PC-9 (cell line): ENCODE measurements at regions of chr11 and their contacts with region 1.

Region 1: DNA sequence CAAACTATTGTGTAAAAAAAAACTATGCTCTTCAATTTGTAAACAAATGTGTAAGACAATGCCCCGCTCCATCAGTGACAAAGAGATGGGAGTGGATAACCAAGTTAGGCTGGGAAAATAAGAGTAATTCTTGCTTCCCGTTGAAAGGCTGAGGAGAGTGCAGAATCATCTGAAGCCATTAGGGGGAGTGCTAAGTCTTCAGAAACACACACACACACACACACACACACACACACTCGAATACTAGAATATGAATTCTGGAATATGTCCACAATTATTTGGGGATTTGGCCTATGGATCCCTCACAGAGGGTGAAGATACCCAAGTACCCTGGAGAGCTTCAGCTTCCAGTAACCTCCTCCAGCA is 27.8 kb upstream of the ROBO3 start:
- DNase-seq: peak; percentile 22 to 68
- H3K4me3 ChIP-seq: 0 out of 2 replicates have a peak overlapping the region, but pooled peaks have one; percentile 11
- H3K27ac ChIP-seq: no peak overlapping the region
- H3K4me1 ChIP-seq: peaks cover 48% of the 10 kb centered on the region
- H3K27me3 ChIP-seq: peaks cover 13% of the 10 kb centered on the region
- CTCF ChIP-seq: peak; percentile 66

Region 2: DNA sequence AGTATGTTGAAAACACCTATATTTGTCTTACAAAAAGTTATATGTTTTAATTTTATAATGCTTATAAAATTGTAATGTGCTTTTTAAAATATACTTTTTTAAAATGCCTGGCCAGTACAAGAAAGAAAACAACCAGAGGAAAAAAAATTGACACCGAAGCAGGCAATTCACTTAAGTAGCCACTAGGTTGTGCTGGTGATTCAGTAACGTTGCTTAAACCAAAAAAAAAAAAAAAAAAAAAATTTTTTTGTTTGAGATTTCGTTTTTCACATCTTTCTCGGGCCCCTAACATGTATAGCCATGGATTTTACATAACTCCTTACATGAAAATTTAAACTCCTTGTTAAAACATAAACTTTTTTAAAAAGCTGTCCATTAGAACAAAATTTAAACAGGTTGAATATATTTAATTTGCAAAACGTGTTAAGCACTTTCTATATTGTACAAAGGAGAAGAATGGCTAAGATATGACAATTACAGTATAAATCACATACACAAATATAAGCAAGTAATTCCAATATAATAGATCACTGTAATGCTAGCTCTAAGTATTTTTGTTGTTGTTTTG is 422.0 kb before region 1 on chr11:
- CTCF ChIA-PET with region 1: interaction called, 4 read pairs
- POLR2A ChIA-PET with region 1: no interaction called
- intact Hi-C with region 1: loop called (anchors 2 kb)
- DNase-seq: peak in 1 of 2 experiments; percentile 39
- H3K4me3 ChIP-seq: no peak overlapping the region
- H3K27ac ChIP-seq: no peak overlapping the region
- H3K4me1 ChIP-seq: no peaks in the 10 kb centered on the region
- H3K27me3 ChIP-seq: peaks cover 5% of the 10 kb centered on the region
- CTCF ChIP-seq: peak; percentile 72

Region 3: DNA sequence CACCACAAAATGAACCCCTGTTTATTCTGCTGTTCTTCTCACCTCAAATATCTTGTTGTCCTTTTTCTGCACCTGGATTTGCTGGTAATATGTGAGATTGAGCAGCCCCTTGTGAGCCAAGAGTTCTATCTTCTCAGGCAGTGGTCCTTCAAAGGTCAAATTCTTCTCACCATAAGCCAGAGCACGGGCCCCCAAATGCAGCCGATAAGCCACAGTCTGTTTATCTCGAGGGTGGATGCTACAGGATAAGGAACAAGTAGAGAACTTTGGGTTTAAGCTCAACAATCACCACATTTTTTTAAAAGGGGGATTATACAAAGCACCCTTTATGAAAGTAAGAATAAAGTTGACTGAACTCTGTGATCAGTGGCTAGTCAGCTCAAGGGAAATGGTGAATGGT is 199.0 kb before region 1 on chr11:
- CTCF ChIA-PET with region 1: no interaction called
- POLR2A ChIA-PET with region 1: no interaction called
- intact Hi-C with region 1: no loop called
- DNase-seq: no peak
- H3K4me3 ChIP-seq: no peak overlapping the region
- H3K27ac ChIP-seq: no peak overlapping the region
- H3K4me1 ChIP-seq: no peaks in the 10 kb centered on the region
- H3K27me3 ChIP-seq: no peaks in the 10 kb centered on the region
- CTCF ChIP-seq: no peak

Region 4: GRCh38 chr11:124673333-124674167 is 163.9 kb before region 1 on chr11 and contains the starts of genes SIAE and SPA17:
- CTCF ChIA-PET with region 1: interaction called, 10 read pairs
- POLR2A ChIA-PET with region 1: interaction called, 3 read pairs
- intact Hi-C with region 1: loop called (anchors 1 kb)
- DNase-seq: peak; percentile 91 to 93
- H3K4me3 ChIP-seq: peak within 1 kb of the TSS; percentile 83
- H3K27ac ChIP-seq: peak within 1 kb of the TSS; percentile 50
- H3K4me1 ChIP-seq: peaks cover 18% of the 10 kb centered on the region
- H3K27me3 ChIP-seq: no peaks in the 10 kb centered on the region
- CTCF ChIP-seq: no peak
- total RNA-seq, gene SIAE: 29.2 and 37.9 TPM in 2 replicates
- total RNA-seq, gene SPA17: 6.1 and 15.7 TPM in 2 replicates

Region 5: GRCh38 chr11:124724979-124725718 is 112.3 kb before region 1 on chr11:
- CTCF ChIA-PET with region 1: no interaction called
- POLR2A ChIA-PET with region 1: no interaction called
- intact Hi-C with region 1: no loop called
- DNase-seq: no peak
- H3K4me3 ChIP-seq: no peak overlapping the region
- H3K27ac ChIP-seq: no peak overlapping the region
- H3K4me1 ChIP-seq: no peaks in the 10 kb centered on the region
- H3K27me3 ChIP-seq: peaks cover 47% of the 10 kb centered on the region
- CTCF ChIP-seq: no peak

Region 6: DNA sequence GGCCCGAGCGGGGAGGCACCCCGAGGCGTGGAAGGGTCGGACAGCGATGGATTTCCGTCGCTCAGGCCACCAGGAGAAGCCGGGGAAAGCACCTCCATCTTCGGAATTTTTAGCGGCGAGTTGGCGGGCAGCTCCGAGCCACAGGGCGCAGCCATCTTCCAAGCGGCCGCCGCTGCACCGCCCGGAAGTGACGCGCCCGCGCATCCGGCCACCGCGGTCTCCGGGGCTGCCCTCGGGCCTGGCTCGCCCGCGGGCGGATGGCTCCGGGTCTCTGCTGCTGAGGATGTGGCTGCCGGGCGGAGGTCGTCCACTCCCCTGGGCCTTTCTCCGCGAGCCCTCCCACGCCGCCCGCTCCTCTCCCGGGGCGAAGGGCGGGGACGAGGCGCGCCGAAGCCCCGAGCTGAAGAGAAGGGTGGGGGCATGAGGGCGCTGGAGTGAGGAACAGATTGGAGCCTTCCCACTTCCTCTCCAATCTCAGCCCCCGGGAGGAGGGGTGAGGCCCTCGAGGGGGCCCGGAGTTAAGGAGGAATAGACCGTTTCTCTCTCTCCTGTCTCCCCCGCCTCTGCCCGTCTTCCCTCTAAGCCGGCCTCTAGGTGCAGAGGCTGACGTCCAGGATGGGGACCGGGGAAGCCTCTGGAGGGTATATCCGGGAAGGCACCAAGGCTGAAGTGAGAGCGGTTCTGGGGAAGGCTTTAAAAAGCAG is 37.1 kb before region 1 on chr11 and contains the start of gene MSANTD2:
- CTCF ChIA-PET with region 1: interaction called, 6 read pairs
- POLR2A ChIA-PET with region 1: no interaction called
- intact Hi-C with region 1: loop called (anchors 1 kb)
- DNase-seq: peak; percentile 53 to 71
- H3K4me3 ChIP-seq: peak within 1 kb of the TSS; percentile 97
- H3K27ac ChIP-seq: peak within 1 kb of the TSS; percentile 56
- H3K4me1 ChIP-seq: peaks cover 29% of the 10 kb centered on the region
- H3K27me3 ChIP-seq: no peaks in the 10 kb centered on the region
- CTCF ChIP-seq: no peak
- total RNA-seq, gene MSANTD2: 16.9 and 18.1 TPM in 2 replicates

Region 7: GRCh38 chr11:124823504-124824372 is 13.7 kb before region 1 on chr11:
- CTCF ChIA-PET with region 1: no interaction called
- POLR2A ChIA-PET with region 1: no interaction called
- intact Hi-C with region 1: no loop called
- DNase-seq: no peak
- H3K4me3 ChIP-seq: no peak overlapping the region
- H3K27ac ChIP-seq: no peak overlapping the region
- H3K4me1 ChIP-seq: no peaks in the 10 kb centered on the region
- H3K27me3 ChIP-seq: no peaks in the 10 kb centered on the region
- CTCF ChIP-seq: no peak

Region 8: DNA sequence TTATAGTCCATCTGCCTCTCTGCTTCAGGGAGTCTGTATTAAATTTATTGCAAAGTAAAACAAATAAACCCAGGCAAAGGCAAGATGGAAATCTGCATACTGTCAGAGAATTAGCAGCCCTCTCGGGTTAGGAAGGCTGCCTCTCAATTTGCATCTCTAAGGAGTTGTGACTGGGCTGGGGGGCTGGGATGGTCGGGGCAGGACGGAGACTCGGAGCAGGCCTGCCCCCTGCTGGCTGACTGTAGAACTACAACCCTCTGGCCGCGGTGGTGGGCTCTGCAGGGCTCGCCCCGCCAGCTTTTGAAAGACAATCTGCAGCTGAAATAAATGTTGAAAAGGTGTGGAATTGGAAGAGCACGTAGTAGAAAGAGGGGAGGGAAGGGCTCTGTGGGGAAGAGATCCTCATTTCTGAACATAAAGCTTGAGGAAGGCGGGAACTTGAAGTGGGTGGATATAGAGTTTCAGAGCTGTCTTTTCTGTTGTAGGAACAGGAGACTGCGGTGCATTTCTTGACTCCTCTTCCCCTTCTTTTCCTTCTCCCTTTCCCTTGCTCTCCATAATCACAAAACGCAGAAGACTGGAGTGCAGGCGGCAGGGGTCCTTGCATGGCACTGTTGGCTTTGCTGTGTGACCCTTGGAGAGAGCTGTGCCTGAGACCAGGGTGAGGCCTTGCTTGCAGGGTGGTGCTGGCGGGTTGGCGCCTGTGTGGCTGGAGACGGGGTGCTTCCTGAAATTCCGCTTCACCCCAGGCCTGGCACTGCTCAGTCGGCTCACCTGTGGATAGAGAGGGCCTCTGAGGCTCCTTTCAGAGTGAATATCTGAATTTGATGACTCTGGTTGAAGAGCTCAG is 304.4 kb after region 1 on chr11:
- CTCF ChIA-PET with region 1: no interaction called
- POLR2A ChIA-PET with region 1: no interaction called
- intact Hi-C with region 1: loop called (anchors 1 kb)
- DNase-seq: peak in 1 of 2 experiments; percentile 46
- H3K4me3 ChIP-seq: no peak overlapping the region
- H3K27ac ChIP-seq: no peak overlapping the region
- H3K4me1 ChIP-seq: no peaks in the 10 kb centered on the region
- H3K27me3 ChIP-seq: no peaks in the 10 kb centered on the region
- CTCF ChIP-seq: peak; percentile 100

Region 9: DNA sequence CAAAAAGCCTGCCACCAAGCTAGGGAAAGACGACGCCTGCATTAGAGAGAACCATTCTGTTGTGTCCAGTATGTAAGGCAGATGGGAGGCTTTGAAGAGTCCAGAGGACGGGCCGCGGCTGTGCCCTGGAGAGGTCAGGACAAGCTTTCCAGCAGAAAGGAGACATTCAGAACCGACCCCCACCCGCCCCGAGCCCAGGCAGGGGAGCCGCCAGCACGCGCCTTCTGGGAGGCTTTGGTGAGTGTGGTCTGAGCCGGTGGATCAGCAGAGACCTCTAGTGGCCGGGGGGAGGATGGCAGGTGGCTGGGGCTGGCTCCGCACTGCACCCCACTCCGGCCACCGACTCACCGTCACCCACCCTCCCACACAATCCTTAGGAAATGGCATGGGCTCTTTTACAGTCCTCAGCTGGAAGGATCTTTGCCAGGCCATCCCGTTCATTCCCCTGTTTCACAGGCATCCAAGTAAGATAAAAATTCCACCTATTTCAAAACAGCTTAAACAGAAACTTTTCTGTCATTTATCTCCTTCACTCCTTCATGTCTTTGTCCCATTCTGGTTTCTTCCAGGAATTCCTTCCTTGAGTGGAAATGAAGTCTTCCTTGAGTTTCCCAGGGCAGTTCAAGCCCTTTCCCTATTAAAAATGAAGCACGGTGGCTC is 567.4 kb after region 1 on chr11:
- CTCF ChIA-PET with region 1: no interaction called
- POLR2A ChIA-PET with region 1: no interaction called
- intact Hi-C with region 1: loop called (anchors 10 kb)
- DNase-seq: peak in 1 of 2 experiments; percentile 56
- H3K4me3 ChIP-seq: no peak overlapping the region
- H3K27ac ChIP-seq: no peak overlapping the region
- H3K4me1 ChIP-seq: no peaks in the 10 kb centered on the region
- H3K27me3 ChIP-seq: peaks cover 88% of the 10 kb centered on the region
- CTCF ChIP-seq: peak; percentile 91